A673 (cell line): ENCODE measurements at regions of chr6 and their contacts with region 1.

Region 1: DNA sequence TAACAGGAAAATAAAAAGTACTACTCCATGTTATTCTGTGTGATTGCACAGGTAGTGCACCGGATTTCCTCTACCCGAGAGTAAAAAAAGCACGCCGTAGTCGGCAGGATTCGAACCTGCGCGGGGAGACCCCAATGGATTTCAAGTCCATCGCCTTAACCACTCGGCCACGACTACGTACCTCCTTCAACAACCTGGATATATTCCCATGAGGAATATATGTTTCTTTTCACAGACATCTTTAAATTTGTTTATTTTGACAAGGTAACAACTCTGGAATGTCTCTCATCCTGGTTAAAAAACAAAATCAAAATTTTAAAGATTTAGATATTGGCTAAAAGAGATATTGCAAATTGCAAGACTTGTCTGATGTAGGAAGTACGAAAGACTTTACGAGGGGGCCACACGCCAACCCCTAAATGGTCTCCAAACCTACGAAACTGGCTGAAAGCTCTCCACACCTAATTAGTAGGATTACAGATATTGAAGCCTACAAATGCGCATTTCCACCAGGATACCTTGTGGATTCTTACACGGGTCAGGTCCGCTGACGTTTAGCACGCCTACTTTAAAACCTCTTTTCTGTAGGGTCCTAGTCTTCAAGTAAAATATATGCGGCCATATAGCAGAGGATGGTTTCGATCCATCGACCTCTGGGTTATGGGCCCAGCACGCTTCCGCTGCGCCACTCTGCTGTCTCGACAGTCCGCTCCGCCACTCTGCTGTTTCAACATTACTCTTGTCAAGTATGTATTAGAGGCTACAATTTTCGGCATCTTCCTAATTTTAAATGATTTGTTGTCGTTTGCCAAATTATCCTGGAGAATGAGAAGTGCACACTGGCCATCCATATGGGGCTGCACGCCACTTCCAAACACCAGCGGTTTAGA is 52.3 kb upstream of the BTN3A2 start:
- DNase-seq: peak; percentile 95
- H3K4me3 ChIP-seq: peak overlapping the region; percentile 73
- H3K27ac ChIP-seq: peak overlapping the region; percentile 57
- H3K4me1 ChIP-seq: no peaks in the 10 kb centered on the region
- H3K27me3 ChIP-seq: no peaks in the 10 kb centered on the region
- CTCF ChIP-seq: no peak

Region 2: DNA sequence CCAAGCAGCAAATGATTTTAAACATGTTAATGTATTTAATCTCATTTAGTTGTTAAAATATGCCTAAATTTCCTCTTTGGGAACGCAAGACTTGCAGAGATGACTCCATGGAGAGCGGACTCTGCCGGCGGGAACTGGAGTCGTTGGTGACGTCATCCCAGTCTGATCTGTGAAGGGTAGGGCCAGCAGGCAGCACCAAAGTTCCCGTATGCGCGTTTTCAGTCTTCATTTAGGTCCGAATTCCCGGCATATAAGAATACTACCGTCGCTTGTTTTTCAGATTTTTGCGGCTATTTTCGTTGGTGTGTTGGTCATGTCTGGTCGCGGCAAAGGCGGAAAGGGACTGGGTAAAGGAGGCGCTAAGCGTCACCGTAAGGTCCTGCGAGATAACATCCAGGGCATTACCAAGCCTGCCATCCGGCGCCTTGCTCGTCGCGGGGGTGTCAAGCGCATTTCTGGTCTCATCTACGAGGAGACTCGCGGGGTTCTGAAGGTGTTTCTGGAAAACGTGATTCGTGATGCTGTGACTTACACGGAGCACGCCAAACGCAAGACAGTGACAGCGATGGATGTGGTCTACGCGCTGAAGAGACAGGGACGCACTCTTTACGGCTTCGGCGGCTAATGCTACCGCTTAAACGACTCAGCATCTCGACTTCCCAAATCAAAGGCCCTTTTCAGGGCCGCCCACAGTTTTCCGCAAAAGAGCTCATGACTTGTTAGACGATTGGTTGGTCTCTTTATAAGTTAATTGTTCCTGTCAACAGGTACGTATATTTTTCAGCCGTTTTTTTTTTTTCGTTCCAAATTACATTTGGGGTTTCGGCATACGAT is 108.2 kb before region 1 on chr6:
- CTCF ChIA-PET with region 1: no interaction called
- POLR2A ChIA-PET with region 1: no interaction called
- intact Hi-C with region 1: no loop called
- DNase-seq: peak; percentile 99
- H3K4me3 ChIP-seq: peak overlapping the region; percentile 69
- H3K27ac ChIP-seq: peak overlapping the region; percentile 89
- H3K4me1 ChIP-seq: peaks cover 13% of the 10 kb centered on the region
- H3K27me3 ChIP-seq: no peaks in the 10 kb centered on the region
- CTCF ChIP-seq: peak; percentile 51

Region 3: GRCh38 chr6:26270903-26271667 is 41.7 kb before region 1 on chr6:
- CTCF ChIA-PET with region 1: no interaction called
- POLR2A ChIA-PET with region 1: interaction called, 16 read pairs
- intact Hi-C with region 1: no loop called
- DNase-seq: peak; percentile 97
- H3K4me3 ChIP-seq: peak overlapping the region; percentile 66
- H3K27ac ChIP-seq: peak overlapping the region; percentile 94
- H3K4me1 ChIP-seq: peaks cover 16% of the 10 kb centered on the region
- H3K27me3 ChIP-seq: no peaks in the 10 kb centered on the region
- CTCF ChIP-seq: no peak

Region 4: DNA sequence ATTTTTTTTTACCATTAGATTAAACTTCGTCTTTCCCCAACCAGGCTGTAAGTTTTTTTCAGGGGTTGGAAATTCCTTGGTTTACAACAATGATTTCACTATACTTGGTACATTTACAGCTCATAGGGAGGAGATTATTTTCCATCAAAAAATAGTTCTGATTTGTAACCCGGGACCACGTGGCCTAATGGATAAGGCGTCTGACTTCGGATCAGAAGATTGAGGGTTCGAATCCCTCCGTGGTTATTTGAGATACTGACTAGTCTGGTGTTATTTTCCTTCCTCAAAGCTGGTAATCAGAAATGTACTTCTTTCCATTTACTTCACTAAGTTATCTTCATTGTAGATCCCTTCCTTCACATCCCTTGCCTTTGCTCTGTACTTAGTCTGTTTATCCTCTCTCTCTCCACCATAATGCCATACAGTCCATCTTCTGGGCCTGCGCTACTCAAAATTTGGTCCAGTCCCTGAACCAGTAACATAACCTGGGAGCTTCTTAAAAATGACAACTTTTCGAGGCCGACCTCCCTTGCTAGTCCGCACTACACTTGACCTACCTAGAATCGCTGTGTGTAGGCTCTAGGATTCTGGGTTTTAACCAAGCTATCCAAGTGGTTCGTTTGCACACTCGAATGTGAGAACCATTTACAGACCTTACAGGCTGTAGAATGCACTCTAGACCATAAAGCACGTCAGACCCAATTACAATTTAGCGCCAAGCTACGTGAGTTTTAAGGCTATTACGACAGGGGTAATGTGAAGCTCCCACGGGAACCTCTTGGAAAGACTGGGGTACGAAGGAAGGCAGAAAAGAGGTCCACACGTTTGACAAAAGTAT is 10.1 kb after region 1 on chr6:
- CTCF ChIA-PET with region 1: no interaction called
- POLR2A ChIA-PET with region 1: no interaction called
- intact Hi-C with region 1: loop called (anchors 1 kb)
- DNase-seq: peak; percentile 96
- H3K4me3 ChIP-seq: peak overlapping the region; percentile 65
- H3K27ac ChIP-seq: peak overlapping the region; percentile 59
- H3K4me1 ChIP-seq: no peaks in the 10 kb centered on the region
- H3K27me3 ChIP-seq: no peaks in the 10 kb centered on the region
- CTCF ChIP-seq: no peak

Region 5: GRCh38 chr6:26537846-26538571 is 225.3 kb after region 1 on chr6 and contains the start of gene HMGN4:
- CTCF ChIA-PET with region 1: no interaction called
- POLR2A ChIA-PET with region 1: no interaction called
- intact Hi-C with region 1: loop called (anchors 1 kb)
- DNase-seq: peak; percentile 94
- H3K4me3 ChIP-seq: peak within 1 kb of the TSS; percentile 83
- H3K27ac ChIP-seq: peak within 1 kb of the TSS; percentile 86
- H3K4me1 ChIP-seq: peaks cover 32% of the 10 kb centered on the region
- H3K27me3 ChIP-seq: no peaks in the 10 kb centered on the region
- CTCF ChIP-seq: peak; percentile 22; the same call in 1 of the 2 replicates
- total RNA-seq, gene HMGN4: 55.9 and 58.6 TPM in 2 replicates

Region 6: DNA sequence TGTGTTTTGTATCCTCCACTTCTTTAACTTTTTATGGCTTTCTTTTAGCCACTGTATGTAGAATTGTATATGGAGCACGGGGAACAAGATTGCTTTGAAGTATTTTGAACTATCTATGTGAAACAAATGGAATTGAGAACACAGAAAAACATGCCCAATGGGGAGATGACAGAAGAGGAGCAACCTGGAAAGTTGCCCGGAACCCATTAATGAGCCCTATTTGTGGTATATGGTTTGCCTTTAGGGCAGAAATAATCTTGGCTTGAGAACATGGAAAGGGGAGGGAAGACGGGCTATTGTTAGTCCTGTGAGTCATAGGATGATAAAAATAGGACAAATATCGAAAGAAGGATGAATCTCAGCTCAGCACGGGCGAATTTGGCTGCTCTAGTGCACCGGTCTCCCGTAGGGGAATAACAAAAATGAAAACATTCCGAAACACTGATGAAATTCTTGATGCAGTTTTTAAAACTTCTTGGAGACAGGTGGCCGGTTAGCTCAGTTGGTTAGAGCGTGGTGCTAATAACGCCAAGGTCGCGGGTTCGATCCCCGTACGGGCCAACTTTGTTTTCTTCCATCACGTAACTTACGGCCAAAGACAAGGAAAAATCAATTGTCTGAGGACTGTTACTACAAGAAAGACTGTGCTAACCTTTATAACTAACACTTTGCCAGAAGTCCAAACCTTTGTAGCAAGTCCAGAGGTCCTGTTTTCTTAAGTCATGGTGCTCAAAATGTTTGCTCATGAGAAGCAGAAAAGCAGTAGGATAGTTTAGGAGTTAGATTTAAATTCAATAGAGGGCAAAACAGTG is 241.1 kb after region 1 on chr6:
- CTCF ChIA-PET with region 1: no interaction called
- POLR2A ChIA-PET with region 1: no interaction called
- intact Hi-C with region 1: loop called (anchors 5 kb)
- DNase-seq: peak; percentile 89
- H3K4me3 ChIP-seq: peak overlapping the region; percentile 61
- H3K27ac ChIP-seq: peak overlapping the region; percentile 69
- H3K4me1 ChIP-seq: no peaks in the 10 kb centered on the region
- H3K27me3 ChIP-seq: no peaks in the 10 kb centered on the region
- CTCF ChIP-seq: no peak

Region 7: GRCh38 chr6:26623339-26623859 is 310.7 kb after region 1 on chr6:
- CTCF ChIA-PET with region 1: no interaction called
- POLR2A ChIA-PET with region 1: no interaction called
- intact Hi-C with region 1: no loop called
- DNase-seq: no peak
- H3K4me3 ChIP-seq: no peak overlapping the region
- H3K27ac ChIP-seq: no peak overlapping the region
- H3K4me1 ChIP-seq: no peaks in the 10 kb centered on the region
- H3K27me3 ChIP-seq: no peaks in the 10 kb centered on the region
- CTCF ChIP-seq: no peak